Lower leg skin (tissue), 4 donors: ENCODE measurements at regions of chr5 and their contacts with region 1.

Region 1: GRCh38 chr5:101212942-101213514 is 309.9 kb upstream of the ST8SIA4 start:
- DNase-seq: no peak
- H3K4me3 ChIP-seq: no peak overlapping the region
- CTCF ChIP-seq: no peak
- POLR2A ChIP-seq: no peak

Region 2: GRCh38 chr5:99694884-99695283 is 1518.1 kb before region 1 on chr5:
- intact Hi-C with region 1: no loop called
- DNase-seq: no peak
- H3K4me3 ChIP-seq: no peak overlapping the region
- CTCF ChIP-seq: no peak
- POLR2A ChIP-seq: no peak

Region 3: GRCh38 chr5:101242471-101242870 is 29.4 kb after region 1 on chr5:
- intact Hi-C with region 1: loop called (anchors 1 kb)
- DNase-seq: no peak
- H3K4me3 ChIP-seq: no peak overlapping the region
- CTCF ChIP-seq: no peak
- POLR2A ChIP-seq: no peak